ENCODE measurements at regions of chr7 and their contacts with region 1.

Region 1: GRCh38 chr7:149195180-149196150 is at the start of gene ZNF282:
- DNase-seq: peak; percentile 91
- H3K4me3 ChIP-seq: peak within 1 kb of the TSS; percentile 70 to 83 (median 78)
- H3K27ac ChIP-seq: peak within 1 kb of the TSS; percentile 61
- H3K4me1 ChIP-seq: peaks cover 25% of the 10 kb centered on the region
- H3K27me3 ChIP-seq: peaks cover 0 to 2% of the 10 kb centered on the region in 2 experiments
- CTCF ChIP-seq: peak; percentile 75 to 79
- POLR2A ChIP-seq: peak; percentile 90
- total RNA-seq, gene ZNF282: 34.4 and 36.0 TPM in 2 replicates

Region 2: GRCh38 chr7:149036676-149037075 is 158.8 kb before region 1 on chr7:
- CTCF ChIA-PET with region 1: no interaction called
- POLR2A ChIA-PET with region 1: no interaction called
- dilution Hi-C with region 1: no loop called
- intact Hi-C with region 1: no loop called
- DNase-seq: no peak
- H3K4me3 ChIP-seq: no peak overlapping the region
- H3K27ac ChIP-seq: no peak overlapping the region
- H3K4me1 ChIP-seq: no peaks in the 10 kb centered on the region
- H3K27me3 ChIP-seq: no peaks in the 10 kb centered on the region
- CTCF ChIP-seq: no peak
- POLR2A ChIP-seq: no peak

Region 3: GRCh38 chr7:149125863-149126661 is 69.4 kb before region 1 on chr7 and contains the start of gene ZNF425:
- CTCF ChIA-PET with region 1: interaction called, 9 read pairs
- POLR2A ChIA-PET with region 1: no interaction called
- dilution Hi-C with region 1: no loop called
- intact Hi-C with region 1: loop called (anchors 1 kb)
- DNase-seq: peak; percentile 93
- H3K4me3 ChIP-seq: peak within 1 kb of the TSS; percentile 56 to 96 (median 86)
- H3K27ac ChIP-seq: peak within 1 kb of the TSS; percentile 39
- H3K4me1 ChIP-seq: peaks cover 13% of the 10 kb centered on the region
- H3K27me3 ChIP-seq: no peaks in the 10 kb centered on the region
- CTCF ChIP-seq: peak; percentile 94 to 97
- POLR2A ChIP-seq: peak; percentile 81
- total RNA-seq, gene ZNF425: 0.93 and 2.0 TPM in 2 replicates

Region 4: DNA sequence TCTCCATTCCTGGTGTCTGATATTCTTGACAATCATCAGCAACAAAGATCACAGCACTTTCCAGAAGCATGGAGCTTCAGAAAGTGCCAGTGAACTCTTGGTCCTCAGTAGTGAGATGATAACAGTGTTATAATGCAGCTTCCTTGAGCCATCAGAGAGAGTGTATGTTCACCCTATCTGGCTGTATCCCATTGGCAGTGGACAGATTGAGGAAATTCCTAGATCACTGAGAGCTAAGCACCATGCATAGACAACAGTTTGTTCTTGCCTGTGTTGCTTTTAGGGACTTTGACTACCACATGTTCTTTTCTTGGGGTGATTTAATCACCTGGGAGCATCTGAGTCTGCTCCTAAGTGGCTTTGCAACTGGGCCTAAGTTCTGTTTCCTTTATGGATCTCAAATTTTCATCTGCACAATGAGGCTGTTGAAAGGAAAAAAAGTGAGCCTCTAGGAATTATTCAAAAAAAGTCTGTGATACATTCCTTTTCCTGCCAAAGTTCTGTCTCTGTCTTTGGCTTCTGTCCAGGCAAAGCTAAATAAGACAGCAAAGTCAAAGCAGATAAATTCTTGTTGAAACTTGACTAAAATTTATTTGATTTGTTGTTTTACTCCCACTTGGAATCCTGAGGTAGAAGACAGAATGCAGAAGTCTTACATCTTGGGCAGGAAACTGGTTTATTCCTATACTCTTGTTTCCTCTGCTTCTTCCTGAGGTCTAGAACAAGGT is 14.6 kb before region 1 on chr7:
- CTCF ChIA-PET with region 1: interaction called, 13 read pairs
- POLR2A ChIA-PET with region 1: no interaction called
- dilution Hi-C with region 1: no loop called
- intact Hi-C with region 1: no loop called
- DNase-seq: peak; percentile 27
- H3K4me3 ChIP-seq: no peak overlapping the region
- H3K27ac ChIP-seq: no peak overlapping the region
- H3K4me1 ChIP-seq: peaks cover 9% of the 10 kb centered on the region
- H3K27me3 ChIP-seq: no peaks in the 10 kb centered on the region
- CTCF ChIP-seq: no peak
- POLR2A ChIP-seq: no peak

Region 5: DNA sequence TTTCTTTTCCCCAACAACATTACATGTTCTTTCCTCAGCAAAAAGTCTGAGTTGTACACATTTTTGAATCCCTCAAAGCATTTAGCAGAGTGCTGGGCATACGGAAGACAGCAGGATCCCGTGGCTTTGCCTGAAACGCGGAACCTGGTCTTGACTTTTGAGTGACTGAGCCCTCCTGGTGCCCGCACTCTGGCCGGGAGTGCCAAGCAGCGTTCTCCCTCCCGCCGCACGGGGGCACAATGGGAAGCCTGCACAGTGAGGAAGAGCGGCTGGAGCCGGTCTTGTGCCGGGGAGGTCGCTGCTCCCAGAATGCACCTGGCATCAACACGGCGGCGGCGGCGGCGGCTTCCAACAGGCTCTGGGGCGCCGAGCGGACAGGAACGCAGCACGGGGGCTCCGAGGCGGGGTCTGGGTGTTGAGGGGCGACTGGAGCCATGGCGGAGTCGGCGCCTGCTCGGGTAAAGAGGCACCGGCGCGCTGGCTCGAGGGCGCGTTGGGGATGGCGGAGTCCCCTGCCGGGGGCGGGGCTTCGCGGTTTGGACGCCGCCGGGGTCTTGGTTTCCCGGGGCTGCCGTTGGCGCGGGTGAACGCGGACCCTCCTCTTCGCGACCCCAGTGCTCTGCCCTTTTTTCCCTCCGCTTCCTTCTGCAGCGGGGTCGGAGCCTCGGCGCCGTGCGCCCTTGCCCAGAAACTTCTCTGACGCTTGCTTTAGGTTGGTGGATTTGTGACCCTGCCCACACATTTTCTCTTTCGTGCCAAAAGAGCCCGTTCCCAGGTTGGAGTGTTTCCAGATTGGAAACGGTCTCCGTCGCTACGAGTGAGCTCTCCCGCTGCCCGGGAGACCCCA is 44.1 kb after region 1 on chr7 and contains the start of gene ZNF212:
- CTCF ChIA-PET with region 1: no interaction called
- POLR2A ChIA-PET with region 1: no interaction called
- dilution Hi-C with region 1: no loop called
- intact Hi-C with region 1: loop called (anchors 1 kb)
- DNase-seq: peak; percentile 91
- H3K4me3 ChIP-seq: peak within 1 kb of the TSS; percentile 62 to 86 (median 73)
- H3K27ac ChIP-seq: peak within 1 kb of the TSS; percentile 28
- H3K4me1 ChIP-seq: peaks cover 9% of the 10 kb centered on the region
- H3K27me3 ChIP-seq: no peaks in the 10 kb centered on the region
- CTCF ChIP-seq: peak; percentile 91 to 97
- POLR2A ChIP-seq: no peak
- total RNA-seq, gene ZNF212: 9.0 and 9.2 TPM in 2 replicates

Measured in endothelial cell of umbilical vein (primary cell).